ENCODE measurements at regions of chr2 and their contacts with region 1.

Region 1: DNA sequence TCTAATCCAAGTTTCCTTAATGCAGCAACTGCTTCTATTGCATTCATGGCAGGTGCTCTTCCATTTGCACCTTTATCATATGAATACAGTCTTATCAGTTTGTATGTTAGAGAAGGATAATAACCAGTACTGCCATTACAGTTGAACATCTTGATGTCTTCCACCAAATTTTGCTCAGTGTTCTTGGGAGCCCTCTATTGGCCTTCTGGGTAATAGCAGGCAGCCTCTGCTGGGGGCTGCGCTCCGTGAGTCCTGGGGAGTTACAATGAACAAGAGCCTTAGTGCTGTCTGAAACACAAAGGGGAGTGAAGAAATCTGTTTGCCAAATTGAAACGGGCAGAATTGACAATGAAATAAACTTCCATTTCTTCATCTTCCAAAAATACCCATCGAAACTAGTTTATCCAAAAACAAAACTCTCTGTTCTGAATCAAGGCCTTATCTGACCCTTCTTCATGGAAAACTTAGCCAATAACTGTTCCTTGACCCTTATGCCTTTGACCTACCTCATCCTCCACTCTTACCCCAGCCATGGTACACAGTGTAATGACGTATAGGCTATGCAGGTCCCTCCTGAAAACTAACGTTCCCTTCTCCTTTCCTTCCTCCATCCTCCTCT is 79.9 kb downstream of the ALK start:
- DNase-seq: peak in 2 of 10 donors; percentile 10 to 60
- H3K4me3 ChIP-seq: no peak overlapping the region
- H3K27ac ChIP-seq: no peak overlapping the region
- H3K27me3 ChIP-seq: peaks cover 0 to 14% (median 0%) of the 10 kb centered on the region in 45 donors
- CTCF ChIP-seq: peak; percentile 52 to 93 (median 84)

Region 2: DNA sequence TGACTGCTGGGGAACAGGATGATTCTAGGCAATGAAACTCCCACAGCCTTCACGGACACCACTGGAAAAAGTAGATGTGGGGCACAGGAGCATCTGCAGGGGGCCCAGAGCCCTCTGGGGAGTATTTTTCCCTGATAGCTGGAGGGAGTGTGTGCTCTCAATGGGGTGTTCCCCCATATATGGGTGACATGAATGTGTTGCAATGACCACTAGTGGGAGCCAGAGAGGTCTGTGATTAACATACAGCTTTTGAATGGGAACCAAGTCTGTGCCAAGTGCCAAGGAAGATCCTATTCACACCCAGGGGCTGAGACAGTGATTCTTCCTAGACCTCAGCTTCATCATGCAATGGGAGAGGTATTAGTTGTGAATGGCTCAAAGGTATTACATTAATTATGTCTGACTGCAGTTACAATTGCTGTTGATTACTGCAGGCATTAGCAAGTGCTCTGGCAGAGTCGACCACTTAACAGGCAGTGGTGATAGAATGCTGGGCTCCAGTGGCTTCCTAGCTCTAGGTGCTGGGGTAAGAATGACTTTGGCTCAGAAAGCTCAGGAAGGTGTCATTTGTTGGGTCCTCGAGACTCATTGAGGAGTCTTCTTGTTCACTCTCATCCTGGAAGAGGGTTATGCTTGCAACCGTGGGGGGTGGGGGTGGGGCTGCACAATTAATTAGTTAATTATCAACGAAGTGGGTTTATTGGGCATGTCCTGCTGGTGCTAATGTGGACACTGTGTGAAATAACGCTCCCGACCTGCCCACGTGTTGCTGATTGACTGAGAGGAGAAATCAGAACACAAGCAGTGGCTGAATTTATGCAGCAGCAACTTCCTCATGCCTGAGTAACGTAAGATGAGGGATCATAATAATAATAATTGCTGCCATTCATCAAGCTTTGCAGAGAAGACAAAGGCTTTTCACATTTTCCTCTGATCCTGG is 532.1 kb before region 1 on chr2:
- intact Hi-C with region 1: loop called (anchors 5 to 10 kb)
- DNase-seq: peak in 4 of 10 donors; percentile 29 to 54 (median 36)
- H3K4me3 ChIP-seq: no peak overlapping the region
- H3K27ac ChIP-seq: no peak overlapping the region
- H3K27me3 ChIP-seq: peaks cover 0 to 15% (median 0%) of the 10 kb centered on the region in 45 donors
- CTCF ChIP-seq: peak; percentile 43 to 87 (median 77)